ENCODE measurements at regions of chr15 and their contacts with region 1.

Region 1: GRCh38 chr15:28123408-28124023 is 24.4 kb upstream of the OCA2 start:
- DNase-seq: peak; percentile 76 to 87
- ATAC-seq: peak; percentile 78
- H3K4me3 ChIP-seq: no peak overlapping the region
- H3K27ac ChIP-seq: no peak overlapping the region
- H3K4me1 ChIP-seq: no peaks in the 10 kb centered on the region
- H3K27me3 ChIP-seq: no peaks in the 10 kb centered on the region

Region 2: DNA sequence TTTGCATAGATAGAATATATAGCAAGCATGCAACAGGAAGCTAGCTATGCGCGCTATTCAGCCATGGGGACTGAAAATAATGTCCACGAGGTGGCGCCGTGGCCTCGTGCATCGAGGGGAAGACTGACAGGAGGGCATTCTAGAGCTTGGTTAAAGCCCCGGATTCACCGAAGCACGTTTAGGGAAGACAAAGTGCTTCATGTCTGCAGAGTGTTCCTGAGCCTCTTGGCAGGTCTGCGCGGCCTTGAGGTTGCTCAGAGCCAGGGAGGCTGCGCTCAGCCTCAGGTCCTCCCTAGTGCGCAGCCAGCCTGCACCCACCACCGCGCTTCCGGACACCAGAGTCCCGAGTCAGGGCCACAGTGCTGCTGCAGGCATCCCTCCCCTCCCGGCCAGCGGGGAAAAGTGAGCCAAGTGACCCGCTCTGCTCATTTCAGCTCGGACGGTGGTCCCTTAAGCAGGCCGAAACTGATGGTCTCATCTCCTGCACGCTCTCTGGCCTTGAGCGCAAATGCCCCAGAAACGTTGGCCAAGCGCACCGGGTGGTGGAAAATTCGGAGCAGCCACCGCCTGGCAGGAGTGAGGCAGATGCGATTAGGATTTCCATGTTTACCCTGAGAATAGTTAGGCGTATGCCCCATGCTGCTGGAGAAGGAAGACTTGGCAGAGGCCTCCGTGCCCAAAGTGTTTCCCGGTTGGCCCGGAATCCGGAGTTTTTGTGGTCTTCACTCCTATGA is 1231.9 kb before region 1 on chr15:
- intact Hi-C with region 1: loop called in 1 of 2 experiments (anchors 10 kb)
- DNase-seq: peak in 1 of 2 donors; percentile 80
- ATAC-seq: no peak
- H3K4me3 ChIP-seq: no peak overlapping the region
- H3K27ac ChIP-seq: no peak overlapping the region
- H3K4me1 ChIP-seq: no peaks in the 10 kb centered on the region
- H3K27me3 ChIP-seq: no peaks in the 10 kb centered on the region

Region 3: GRCh38 chr15:27757050-27757449 is 366.5 kb before region 1 on chr15:
- intact Hi-C with region 1: no loop called
- DNase-seq: no peak
- ATAC-seq: no peak
- H3K4me3 ChIP-seq: no peak overlapping the region
- H3K27ac ChIP-seq: no peak overlapping the region
- H3K4me1 ChIP-seq: no peaks in the 10 kb centered on the region
- H3K27me3 ChIP-seq: no peaks in the 10 kb centered on the region

Region 4: GRCh38 chr15:27808182-27808581 is 315.3 kb before region 1 on chr15:
- intact Hi-C with region 1: no loop called
- DNase-seq: no peak
- ATAC-seq: no peak
- H3K4me3 ChIP-seq: no peak overlapping the region
- H3K27ac ChIP-seq: no peak overlapping the region
- H3K4me1 ChIP-seq: no peaks in the 10 kb centered on the region
- H3K27me3 ChIP-seq: no peaks in the 10 kb centered on the region

Region 5: DNA sequence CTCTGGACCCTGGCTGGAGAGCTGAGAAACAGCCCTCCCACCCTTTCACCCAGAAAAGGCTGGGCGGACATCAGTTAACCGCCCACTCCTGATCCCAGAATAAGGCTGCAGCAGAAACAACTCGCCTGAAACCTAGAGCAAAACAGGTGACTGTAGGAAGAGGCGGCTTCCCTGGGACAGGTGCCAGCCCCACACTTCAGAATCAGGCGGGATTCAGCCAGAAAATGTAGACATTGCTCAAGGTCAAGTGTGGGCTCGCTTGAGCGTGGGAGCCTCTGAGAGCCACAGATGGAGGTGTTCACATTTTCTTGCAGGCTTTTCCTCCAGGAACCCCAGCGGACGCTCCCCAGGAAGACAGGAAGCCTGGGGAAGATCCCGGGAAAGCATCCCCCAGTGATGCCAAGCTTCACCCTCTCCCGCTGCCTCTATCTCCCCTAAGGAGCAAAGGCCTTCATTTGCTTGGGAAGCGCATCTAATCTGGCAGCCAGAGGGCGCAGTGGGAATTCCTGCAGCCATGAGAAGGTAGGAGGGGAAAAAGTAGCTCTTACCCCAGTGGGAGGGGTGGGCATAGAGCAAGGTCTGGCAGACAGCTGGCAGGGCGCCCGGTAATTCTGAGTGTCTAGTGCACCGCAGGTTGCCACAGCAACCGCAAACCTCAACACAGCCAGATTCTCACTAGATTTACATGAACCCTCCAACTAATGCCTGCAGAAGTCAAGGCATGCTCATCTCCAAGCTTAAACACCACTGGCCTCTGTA is 102.1 kb before region 1 on chr15:
- intact Hi-C with region 1: loop called (anchors 2 to 10 kb)
- DNase-seq: peak; percentile 83 to 88
- ATAC-seq: peak; percentile 39
- H3K4me3 ChIP-seq: no peak overlapping the region
- H3K27ac ChIP-seq: no peak overlapping the region
- H3K4me1 ChIP-seq: no peaks in the 10 kb centered on the region
- H3K27me3 ChIP-seq: no peaks in the 10 kb centered on the region

Region 6: GRCh38 chr15:28060005-28060404 is 63.5 kb before region 1 on chr15:
- intact Hi-C with region 1: loop called in 1 of 2 experiments (anchors 10 kb)
- DNase-seq: no peak
- ATAC-seq: no peak
- H3K4me3 ChIP-seq: no peak overlapping the region
- H3K27ac ChIP-seq: no peak overlapping the region
- H3K4me1 ChIP-seq: no peaks in the 10 kb centered on the region
- H3K27me3 ChIP-seq: no peaks in the 10 kb centered on the region

Region 7: GRCh38 chr15:28086175-28086703 is 37.3 kb before region 1 on chr15:
- intact Hi-C with region 1: loop called (anchors 2 kb)
- DNase-seq: peak in 1 of 2 donors; percentile 66
- ATAC-seq: peak; percentile 89
- H3K4me3 ChIP-seq: no peak overlapping the region
- H3K27ac ChIP-seq: no peak overlapping the region
- H3K4me1 ChIP-seq: no peaks in the 10 kb centered on the region
- H3K27me3 ChIP-seq: no peaks in the 10 kb centered on the region

Region 8: GRCh38 chr15:28178290-28178689 is 54.8 kb after region 1 on chr15:
- intact Hi-C with region 1: loop called in 1 of 2 experiments (anchors 10 kb)
- DNase-seq: no peak
- ATAC-seq: peak; percentile 72
- H3K4me3 ChIP-seq: no peak overlapping the region
- H3K27ac ChIP-seq: peak overlapping the region; percentile 15 to 75
- H3K4me1 ChIP-seq: peaks cover 0 to 2% of the 10 kb centered on the region in 2 donors
- H3K27me3 ChIP-seq: no peaks in the 10 kb centered on the region

Measured in aorta (tissue), 5 donors.